ENCODE measurements at regions of chr1 and their contacts with region 1.

Region 1: DNA sequence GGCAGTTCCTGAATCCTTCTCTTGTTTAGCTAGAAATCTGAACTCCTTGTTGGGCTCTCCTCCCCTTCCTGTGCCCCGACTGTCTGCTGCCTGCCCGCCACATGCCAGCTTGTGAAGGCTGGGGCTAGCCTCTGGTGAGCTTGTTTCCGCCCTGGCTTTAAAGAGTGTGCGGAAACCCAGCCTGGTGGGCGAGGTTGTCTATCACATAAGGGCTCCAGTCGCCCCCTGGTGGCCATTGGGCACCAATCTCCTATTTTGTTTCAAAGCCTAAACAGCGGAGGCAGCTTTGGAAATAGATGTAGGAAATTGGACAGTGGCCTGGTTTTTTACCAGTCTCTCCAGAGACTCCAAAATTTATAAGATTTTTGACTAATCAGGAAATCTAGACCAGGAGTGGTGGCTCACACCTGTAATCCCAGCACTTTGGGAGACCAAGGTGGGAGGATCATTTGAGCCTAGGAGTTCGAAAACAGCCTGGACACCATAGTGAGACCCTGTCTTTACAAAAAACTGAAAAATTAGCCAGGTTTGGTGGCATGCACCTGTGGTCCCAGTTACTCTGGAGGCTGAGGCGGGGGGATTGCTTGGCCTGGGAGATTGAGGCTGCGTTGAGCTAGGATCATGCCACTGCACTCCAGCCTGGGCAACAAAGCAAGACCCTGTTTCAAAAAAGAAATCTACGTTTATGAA is 9.8 kb downstream of the ATP8B2 start:
- DNase-seq: peak; percentile 93
- H3K4me3 Mint-ChIP-seq: peak overlapping the region; percentile 43
- H3K27ac Mint-ChIP-seq: peak overlapping the region; percentile 81
- H3K4me1 Mint-ChIP-seq: peaks cover 89% of the 10 kb centered on the region
- H3K27me3 Mint-ChIP-seq: no peaks in the 10 kb centered on the region

Region 2: DNA sequence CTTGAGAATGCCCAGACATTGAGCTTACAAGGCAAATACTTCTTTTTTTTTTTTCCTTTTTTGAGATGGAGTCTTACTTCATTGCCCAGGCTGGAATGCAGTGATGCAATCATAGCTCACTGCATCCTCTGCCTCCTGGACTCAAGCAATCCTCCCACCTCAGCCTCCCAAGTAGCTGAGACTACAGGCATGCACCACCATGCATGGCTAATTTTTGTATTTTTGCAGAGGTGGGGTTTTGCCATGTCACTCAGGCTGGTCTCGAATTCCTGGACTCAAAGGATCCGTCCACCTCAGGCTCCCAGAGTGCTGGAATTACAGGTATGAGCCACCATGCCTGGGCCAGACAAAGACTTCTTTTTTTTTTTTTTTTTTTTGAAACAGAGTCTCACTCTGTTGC is 259.4 kb before region 1 on chr1:
- CTCF ChIA-PET with region 1: no interaction called
- POLR2A ChIA-PET with region 1: no interaction called
- DNase-seq: no peak
- H3K4me3 Mint-ChIP-seq: no peak overlapping the region
- H3K27ac Mint-ChIP-seq: no peak overlapping the region
- H3K4me1 Mint-ChIP-seq: no peaks in the 10 kb centered on the region
- H3K27me3 Mint-ChIP-seq: peaks cover 11% of the 10 kb centered on the region

Region 3: GRCh38 chr1:154198756-154199562 is 136.2 kb before region 1 on chr1:
- CTCF ChIA-PET with region 1: interaction called, 19 read pairs
- POLR2A ChIA-PET with region 1: interaction called, 4 read pairs
- DNase-seq: peak; percentile 36
- H3K4me3 Mint-ChIP-seq: no peak overlapping the region
- H3K27ac Mint-ChIP-seq: no peak overlapping the region
- H3K4me1 Mint-ChIP-seq: no peaks in the 10 kb centered on the region
- H3K27me3 Mint-ChIP-seq: peaks cover 14% of the 10 kb centered on the region

Region 4: GRCh38 chr1:154263465-154264332 is 71.5 kb before region 1 on chr1:
- CTCF ChIA-PET with region 1: interaction called, 12 read pairs
- POLR2A ChIA-PET with region 1: no interaction called
- DNase-seq: no peak
- H3K4me3 Mint-ChIP-seq: no peak overlapping the region
- H3K27ac Mint-ChIP-seq: peak overlapping the region; percentile 45
- H3K4me1 Mint-ChIP-seq: peaks cover 29% of the 10 kb centered on the region
- H3K27me3 Mint-ChIP-seq: no peaks in the 10 kb centered on the region

Region 5: GRCh38 chr1:154304664-154305337 is 30.4 kb before region 1 on chr1:
- CTCF ChIA-PET with region 1: interaction called, 20 read pairs
- POLR2A ChIA-PET with region 1: no interaction called
- DNase-seq: peak; percentile 19
- H3K4me3 Mint-ChIP-seq: no peak overlapping the region
- H3K27ac Mint-ChIP-seq: no peak overlapping the region
- H3K4me1 Mint-ChIP-seq: peaks cover 23% of the 10 kb centered on the region
- H3K27me3 Mint-ChIP-seq: no peaks in the 10 kb centered on the region

Region 6: DNA sequence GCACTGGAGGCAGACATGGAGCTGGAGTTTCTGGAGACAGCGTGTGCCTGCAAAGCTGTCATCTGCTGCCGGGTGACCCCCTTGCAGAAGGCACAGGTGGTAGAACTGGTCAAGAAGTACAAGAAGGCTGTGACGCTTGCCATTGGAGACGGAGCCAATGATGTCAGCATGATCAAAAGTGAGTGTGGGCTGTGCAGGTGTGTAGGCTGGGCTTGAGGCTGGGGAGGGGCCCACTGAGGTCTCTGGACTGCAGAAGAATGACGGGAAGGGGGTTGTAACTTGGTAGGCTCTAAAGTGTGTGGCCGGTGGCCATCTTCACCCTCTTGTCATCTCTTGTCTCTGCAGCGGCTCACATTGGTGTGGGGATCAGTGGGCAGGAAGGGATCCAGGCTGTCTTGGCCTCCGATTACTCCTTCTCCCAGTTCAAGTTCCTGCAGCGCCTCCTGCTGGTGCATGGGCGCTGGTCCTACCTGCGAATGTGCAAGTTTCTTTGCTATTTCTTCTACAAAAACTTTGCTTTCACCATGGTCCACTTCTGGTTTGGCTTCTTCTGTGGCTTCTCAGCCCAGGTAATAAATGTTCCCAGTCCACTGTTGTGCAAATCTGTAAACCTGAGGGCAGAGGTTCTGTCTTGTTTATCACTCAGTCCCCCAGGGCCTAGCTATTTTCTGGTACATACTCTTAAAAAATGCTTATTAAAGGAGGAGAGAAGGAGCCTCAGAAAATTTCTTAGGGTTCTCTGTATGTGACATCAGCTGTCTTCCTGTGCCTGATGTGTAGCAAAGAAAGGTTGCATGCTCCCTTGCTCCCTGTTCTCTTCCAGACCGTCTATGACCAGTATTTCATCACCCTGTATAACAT is 10.0 kb after region 1 on chr1:
- CTCF ChIA-PET with region 1: interaction called, 138 read pairs
- POLR2A ChIA-PET with region 1: interaction called, 38 read pairs
- DNase-seq: peak; percentile 87
- H3K4me3 Mint-ChIP-seq: peak overlapping the region; percentile 73
- H3K27ac Mint-ChIP-seq: peak overlapping the region; percentile 65
- H3K4me1 Mint-ChIP-seq: peaks cover 75% of the 10 kb centered on the region
- H3K27me3 Mint-ChIP-seq: no peaks in the 10 kb centered on the region

Region 7: DNA sequence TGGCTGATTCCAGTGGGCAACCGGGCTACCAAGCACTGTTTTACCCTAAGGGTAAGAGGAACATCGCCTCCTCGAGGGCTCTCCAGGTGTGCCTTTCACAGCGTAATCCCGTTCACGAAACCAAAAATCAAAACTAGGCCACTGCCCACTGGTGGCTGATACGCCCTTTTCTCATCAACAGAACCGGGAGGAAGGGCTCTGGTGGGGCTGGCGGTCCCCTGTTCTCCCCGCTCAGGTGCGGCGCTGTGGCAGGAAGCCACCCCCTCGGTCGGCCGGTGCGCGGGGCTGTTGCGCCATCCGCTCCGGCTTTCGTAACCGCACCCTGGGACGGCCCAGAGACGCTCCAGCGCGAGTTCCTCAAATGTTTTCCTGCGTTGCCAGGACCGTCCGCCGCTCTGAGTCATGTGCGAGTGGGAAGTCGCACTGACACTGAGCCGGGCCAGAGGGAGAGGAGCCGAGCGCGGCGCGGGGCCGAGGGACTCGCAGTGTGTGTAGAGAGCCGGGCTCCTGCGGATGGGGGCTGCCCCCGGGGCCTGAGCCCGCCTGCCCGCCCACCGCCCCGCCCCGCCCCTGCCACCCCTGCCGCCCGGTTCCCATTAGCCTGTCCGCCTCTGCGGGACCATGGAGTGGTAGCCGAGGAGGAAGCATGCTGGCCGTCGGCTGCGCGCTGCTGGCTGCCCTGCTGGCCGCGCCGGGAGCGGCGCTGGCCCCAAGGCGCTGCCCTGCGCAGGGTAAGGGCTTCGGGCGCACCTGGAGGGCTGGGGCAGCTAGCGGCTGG is 70.0 kb after region 1 on chr1 and contains the start of gene IL6R:
- CTCF ChIA-PET with region 1: interaction called, 11 read pairs
- POLR2A ChIA-PET with region 1: interaction called, 6 read pairs
- DNase-seq: peak; percentile 74
- H3K4me3 Mint-ChIP-seq: peak within 1 kb of the TSS; percentile 77
- H3K27ac Mint-ChIP-seq: peak within 1 kb of the TSS; percentile 88
- H3K4me1 Mint-ChIP-seq: peaks cover 83% of the 10 kb centered on the region
- H3K27me3 Mint-ChIP-seq: peaks cover 19% of the 10 kb centered on the region
- total RNA-seq, gene IL6R: 15.7 to 16.0 TPM

Measured in activated CD4-positive, alpha-beta memory T cell treated with anti-CD3 and anti-CD28 coated beads, Interleukin-2, amount 10 ng/mL, durations not matched to agents 7 days and 5 days (primary cell).